GM10248 (cell line): ENCODE measurements at regions of chr11 and their contacts with region 1.

Region 1: DNA sequence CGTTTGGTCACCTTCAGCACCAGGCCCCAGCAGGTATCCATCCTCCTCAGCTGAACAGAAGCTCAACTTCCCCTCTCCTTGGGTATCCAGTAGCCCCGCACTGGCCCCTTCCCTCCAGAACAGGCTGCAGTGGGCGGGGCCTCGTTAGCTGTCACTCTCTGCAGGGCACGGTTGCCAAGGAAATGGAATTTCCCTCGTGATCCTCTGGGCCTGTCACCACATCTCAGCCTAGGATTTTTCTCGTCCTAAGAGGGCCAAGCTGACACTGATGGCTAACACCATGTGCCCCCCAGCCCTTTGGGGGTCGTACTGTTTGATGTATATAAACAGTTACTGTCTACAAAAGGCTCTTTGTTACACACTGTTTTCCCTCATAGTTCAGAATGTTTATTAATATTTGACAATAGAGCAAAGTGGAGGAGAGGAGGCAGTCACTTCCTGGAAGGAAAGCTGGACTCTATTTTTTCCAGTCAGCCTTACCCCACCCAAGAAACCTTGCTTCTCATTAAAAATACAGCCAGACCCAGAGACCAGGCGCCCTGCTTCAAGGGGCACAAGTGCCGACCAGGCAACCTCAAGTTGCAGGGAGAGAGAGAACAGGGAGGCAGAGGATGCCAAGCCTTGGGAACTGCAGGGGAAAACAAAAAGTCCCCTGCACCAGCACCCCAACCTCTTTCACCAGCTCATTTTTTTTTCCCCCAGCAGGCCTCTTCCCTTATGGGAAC is 44.5 kb downstream of the FEZ1 start:
- DNase-seq: peak; percentile 52
- CTCF ChIP-seq: no peak

Region 2: GRCh38 chr11:125429166-125429707 is 22.3 kb before region 1 on chr11:
- CTCF ChIA-PET with region 1: interaction called, 40 read pairs
- POLR2A ChIA-PET with region 1: no interaction called
- DNase-seq: peak; percentile 79
- CTCF ChIP-seq: peak; percentile 78

Region 3: GRCh38 chr11:125463590-125464269 is 12.2 kb after region 1 on chr11:
- CTCF ChIA-PET with region 1: interaction called, 21 read pairs
- POLR2A ChIA-PET with region 1: no interaction called
- DNase-seq: no peak
- CTCF ChIP-seq: no peak